Aorta (tissue), 5 donors: ENCODE measurements at regions of chr6 and their contacts with region 1.

Region 1: DNA sequence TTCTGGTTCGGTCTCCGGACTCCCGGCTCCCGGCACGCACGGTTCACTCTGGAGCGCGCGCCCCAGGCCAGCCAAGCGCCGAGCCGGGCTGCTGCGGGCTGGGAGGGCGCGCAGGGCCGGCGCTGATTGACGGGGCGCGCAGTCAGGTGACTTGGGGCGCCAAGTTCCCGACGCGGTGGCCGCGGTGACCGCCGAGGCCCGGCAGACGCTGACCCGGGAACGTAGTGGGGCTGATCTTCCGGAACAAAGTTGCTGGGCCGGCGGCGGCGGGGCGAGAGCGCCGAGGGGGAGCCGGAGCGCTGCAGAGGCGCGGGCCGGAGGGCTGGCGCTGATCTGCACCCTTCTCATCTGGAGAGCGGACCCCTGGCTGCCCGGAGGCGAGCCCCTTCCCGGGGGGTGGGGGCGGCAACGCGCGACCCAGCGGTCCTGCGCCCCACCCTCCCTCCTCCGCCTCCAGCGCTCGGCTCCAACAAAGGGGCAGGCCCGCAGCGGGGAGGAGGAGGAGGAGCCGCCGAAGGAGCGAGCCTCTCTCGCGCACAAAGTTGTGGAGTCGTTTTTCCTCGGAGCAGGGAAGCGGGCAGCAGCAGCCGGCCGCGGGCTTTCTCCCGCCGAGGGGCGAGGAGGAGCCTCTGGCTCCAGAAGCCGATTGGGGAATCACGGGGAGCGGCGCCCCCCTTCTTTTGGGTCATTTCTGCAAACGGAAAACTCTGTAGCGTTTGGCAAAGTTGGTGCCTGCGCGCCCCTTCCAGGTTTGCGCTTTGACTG is at the start of gene UTRN:
- DNase-seq: peak; percentile 91 to 94
- ATAC-seq: peak; percentile 92
- H3K4me3 ChIP-seq: peak within 1 kb of the TSS; percentile 73 to 75
- H3K27ac ChIP-seq: peak within 1 kb of the TSS; percentile 57 to 89
- H3K4me1 ChIP-seq: no peaks in the 10 kb centered on the region
- H3K27me3 ChIP-seq: no peaks in the 10 kb centered on the region
- total RNA-seq, gene UTRN: 238 to 259 TPM

Region 2: GRCh38 chr6:144104898-144105487 is 180.0 kb before region 1 on chr6:
- intact Hi-C with region 1: loop called in 1 of 2 experiments (anchors 10 kb)
- DNase-seq: no peak
- ATAC-seq: peak; percentile 85
- H3K4me3 ChIP-seq: no peak overlapping the region
- H3K27ac ChIP-seq: no peak overlapping the region
- H3K4me1 ChIP-seq: no peaks in the 10 kb centered on the region
- H3K27me3 ChIP-seq: no peaks in the 10 kb centered on the region

Region 3: DNA sequence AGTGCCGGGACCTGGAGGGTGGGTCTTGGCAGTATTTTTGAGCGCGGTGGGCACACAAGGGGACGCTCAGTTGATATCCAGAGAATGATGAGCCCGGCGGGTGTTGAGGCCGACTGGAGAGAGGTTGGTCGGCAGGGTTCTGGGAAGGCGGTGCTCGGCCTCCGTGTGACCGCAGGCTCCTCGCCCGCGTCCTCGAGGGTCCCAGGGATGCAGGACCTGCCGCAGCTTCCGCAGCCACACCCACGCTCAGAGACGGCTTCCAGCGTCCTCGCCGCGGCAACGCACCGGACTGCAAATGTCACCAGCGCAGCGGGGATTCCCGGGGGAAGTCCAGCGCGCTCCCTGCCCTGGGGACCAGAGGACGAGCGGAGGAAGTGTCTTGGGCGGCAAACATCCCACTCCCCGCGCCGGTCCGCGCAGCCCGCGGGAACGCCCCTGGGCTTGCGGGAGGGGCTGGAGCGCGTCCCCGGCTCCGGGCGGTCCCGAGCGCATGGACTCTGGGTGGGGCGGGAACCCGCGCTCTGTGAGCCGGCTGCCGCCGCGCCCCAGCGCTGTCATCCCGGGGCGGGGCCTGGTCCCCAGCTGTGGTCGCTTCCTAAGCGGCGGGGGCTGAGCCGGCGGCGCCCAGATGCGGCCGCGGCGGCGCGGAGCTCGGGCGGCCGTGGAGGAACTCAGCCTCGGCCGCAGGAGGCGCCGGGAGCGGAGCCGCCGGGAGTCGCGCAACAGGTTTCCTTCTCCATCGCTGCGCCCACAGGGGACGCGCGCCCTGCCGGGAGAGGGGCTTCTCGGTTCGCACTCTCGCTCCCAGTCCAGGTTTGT is 134.9 kb before region 1 on chr6 and contains the start of gene STX11:
- intact Hi-C with region 1: no loop called
- DNase-seq: peak; percentile 83 to 92
- ATAC-seq: peak; percentile 91
- H3K4me3 ChIP-seq: peak within 1 kb of the TSS; percentile 40 to 86
- H3K27ac ChIP-seq: no peak within 1 kb of the TSS
- H3K4me1 ChIP-seq: no peaks in the 10 kb centered on the region
- H3K27me3 ChIP-seq: no peaks in the 10 kb centered on the region
- total RNA-seq, gene STX11: 6.5 to 7.0 TPM

Region 4: GRCh38 chr6:144248476-144249301 is 36.3 kb before region 1 on chr6:
- intact Hi-C with region 1: loop called in 1 of 2 experiments (anchors 5 kb)
- DNase-seq: no peak
- ATAC-seq: no peak
- H3K4me3 ChIP-seq: no peak overlapping the region
- H3K27ac ChIP-seq: no peak overlapping the region
- H3K4me1 ChIP-seq: peaks cover 2 to 5% of the 10 kb centered on the region in 2 donors
- H3K27me3 ChIP-seq: no peaks in the 10 kb centered on the region

Region 5: GRCh38 chr6:144434308-144434990 is 149.5 kb after region 1 on chr6:
- intact Hi-C with region 1: loop called (anchors 10 kb)
- DNase-seq: peak in 1 of 2 donors; percentile 54
- ATAC-seq: peak; percentile 65
- H3K4me3 ChIP-seq: no peak overlapping the region
- H3K27ac ChIP-seq: no peak overlapping the region
- H3K4me1 ChIP-seq: peaks cover 0 to 2% of the 10 kb centered on the region in 2 donors
- H3K27me3 ChIP-seq: no peaks in the 10 kb centered on the region